AG04449 (cell line): ENCODE measurements at regions of chr1 and their contacts with region 1.

Region 1: DNA sequence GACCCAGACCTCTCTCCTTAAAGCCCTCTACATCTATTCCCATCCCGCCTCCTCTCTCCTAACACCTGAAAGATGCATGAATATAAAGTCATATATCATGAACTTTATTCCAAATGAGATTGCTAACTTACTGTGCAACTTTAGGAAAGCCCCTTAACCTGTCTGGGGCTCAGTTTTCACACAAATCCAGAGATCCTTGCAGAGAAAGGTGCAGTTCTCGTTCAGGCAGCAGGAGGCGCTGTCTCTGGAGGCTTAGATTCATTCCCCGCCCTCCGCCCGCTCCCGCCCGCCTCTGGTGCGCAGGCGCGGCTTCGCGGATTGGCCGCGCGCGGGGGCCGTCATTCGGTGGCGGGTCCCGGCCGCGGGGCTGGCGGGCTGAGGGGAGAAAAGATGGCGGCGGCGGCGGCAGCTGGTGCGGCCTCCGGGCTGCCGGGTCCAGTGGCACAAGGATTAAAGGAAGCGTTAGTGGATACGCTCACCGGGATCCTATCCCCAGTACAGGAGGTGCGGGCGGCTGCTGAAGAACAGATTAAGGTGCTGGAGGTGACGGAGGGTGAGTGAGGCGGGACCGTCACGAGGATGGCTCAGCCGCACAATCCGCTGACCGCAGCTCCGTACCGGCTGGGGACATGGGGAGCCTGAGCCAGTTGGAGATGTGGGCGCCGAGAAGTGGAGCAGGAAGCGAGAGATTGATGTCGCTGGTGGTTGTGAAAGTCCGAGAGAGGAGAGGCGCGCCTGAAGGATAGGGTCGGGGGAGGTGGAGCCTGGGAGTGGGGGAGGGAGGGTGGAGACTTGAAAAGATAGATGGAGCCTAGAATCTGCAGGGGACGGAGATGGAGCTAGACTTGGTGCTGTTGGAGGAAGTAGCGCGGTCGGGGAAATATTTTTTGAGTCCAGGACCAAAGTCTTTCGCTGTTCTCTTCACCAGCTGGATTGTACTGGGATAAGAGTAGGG is at the start of gene IPO9:
- DNase-seq: no peak
- H3K4me3 ChIP-seq: peak within 1 kb of the TSS; percentile 100
- CTCF ChIP-seq: peak; percentile 89

Region 2: GRCh38 chr1:201850053-201850397 is 20.9 kb after region 1 on chr1:
- CTCF ChIA-PET with region 1: interaction called, 24 read pairs
- POLR2A ChIA-PET with region 1: no interaction called
- DNase-seq: peak; percentile 80
- H3K4me3 ChIP-seq: no peak overlapping the region
- CTCF ChIP-seq: no peak